MCF 10A (cell line): ENCODE measurements at regions of chr5 and their contacts with region 1.

Region 1: GRCh38 chr5:139560752-139561654 is at the start of gene UBE2D2:
- DNase-seq: peak; percentile 98
- H3K4me3 Mint-ChIP-seq: peak within 1 kb of the TSS; percentile 85
- H3K27ac Mint-ChIP-seq: peak within 1 kb of the TSS; percentile 88
- H3K4me1 Mint-ChIP-seq: peaks cover 12% of the 10 kb centered on the region
- H3K27me3 Mint-ChIP-seq: no peaks in the 10 kb centered on the region
- CTCF ChIP-seq: no peak
- total RNA-seq, gene UBE2D2: 306 and 329 TPM in 2 replicates

Region 2: DNA sequence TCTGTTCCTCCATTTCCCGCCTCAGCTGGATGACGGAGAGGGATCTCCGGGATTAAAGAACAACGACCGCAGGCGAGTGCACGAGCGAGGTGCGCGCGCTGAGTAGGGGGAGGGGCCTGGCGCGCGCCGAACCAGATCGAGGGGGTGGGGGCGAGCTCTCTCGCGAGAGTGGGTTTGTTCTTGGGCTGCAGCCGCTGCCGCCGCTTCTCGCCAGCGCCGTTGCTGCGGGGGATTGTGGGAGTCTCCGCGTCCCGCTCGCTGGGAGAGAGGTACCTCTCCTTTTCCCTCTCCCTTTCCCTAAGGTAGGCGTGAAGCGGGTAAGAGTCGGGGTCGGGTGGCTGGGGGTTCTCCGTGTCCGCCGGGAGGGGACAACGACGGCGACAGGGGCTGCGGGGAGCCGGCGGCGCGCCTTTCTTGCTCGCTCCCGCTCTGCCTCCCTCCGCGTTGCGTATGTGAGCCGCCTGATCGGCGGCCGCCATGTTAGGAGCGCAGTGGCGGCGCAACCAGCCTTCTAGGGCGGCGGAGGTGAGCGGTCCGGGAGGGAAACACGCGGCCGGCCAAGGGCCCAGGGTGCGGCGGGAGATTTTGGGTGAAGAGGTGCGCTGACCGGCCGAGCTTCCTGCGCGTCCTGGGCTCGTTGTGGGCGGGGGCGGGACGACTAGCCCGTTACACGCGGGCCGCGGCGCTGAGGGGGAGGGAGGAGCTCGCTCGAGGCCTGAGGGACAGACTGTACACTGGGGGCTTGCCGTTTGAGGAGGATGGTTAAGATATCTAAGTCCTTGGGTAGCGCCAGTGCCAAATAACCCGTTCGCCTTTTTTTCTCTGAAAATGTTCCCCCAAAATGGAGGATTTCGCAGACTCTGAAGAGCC is 267.3 kb before region 1 on chr5 and contains the start of gene MATR3:
- CTCF ChIA-PET with region 1: no interaction called
- POLR2A ChIA-PET with region 1: interaction called, 16 read pairs
- intact Hi-C with region 1: no loop called
- DNase-seq: peak; percentile 98
- H3K4me3 Mint-ChIP-seq: peak within 1 kb of the TSS; percentile 94
- H3K27ac Mint-ChIP-seq: peak within 1 kb of the TSS; percentile 99
- H3K4me1 Mint-ChIP-seq: peaks cover 37% of the 10 kb centered on the region
- H3K27me3 Mint-ChIP-seq: no peaks in the 10 kb centered on the region
- CTCF ChIP-seq: no peak
- total RNA-seq, gene MATR3: 152 and 159 TPM in 2 replicates

Region 3: DNA sequence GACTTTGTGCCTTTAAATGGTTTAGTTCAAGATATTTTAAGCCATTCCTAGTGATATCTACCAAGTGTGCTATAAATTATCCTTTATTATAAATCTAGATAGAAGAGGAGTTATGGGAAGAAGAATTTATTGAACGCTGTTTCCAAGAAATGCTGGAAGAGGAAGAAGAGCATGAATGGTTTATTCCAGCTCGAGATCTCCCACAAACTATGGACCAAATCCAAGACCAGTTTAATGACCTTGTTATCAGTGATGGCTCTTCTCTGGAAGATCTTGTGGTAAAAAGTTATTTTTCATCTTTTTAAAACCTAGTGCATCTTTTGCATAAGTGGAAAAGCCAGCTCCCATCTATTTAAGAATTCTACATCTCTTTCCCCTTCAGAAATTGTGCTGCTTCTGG is 196.5 kb before region 1 on chr5:
- CTCF ChIA-PET with region 1: no interaction called
- POLR2A ChIA-PET with region 1: no interaction called
- intact Hi-C with region 1: no loop called
- DNase-seq: no peak
- H3K4me3 Mint-ChIP-seq: no peak overlapping the region
- H3K27ac Mint-ChIP-seq: no peak overlapping the region
- H3K4me1 Mint-ChIP-seq: peaks cover 6% of the 10 kb centered on the region
- H3K27me3 Mint-ChIP-seq: no peaks in the 10 kb centered on the region
- CTCF ChIP-seq: no peak

Region 4: GRCh38 chr5:139574641-139575312 is 13.8 kb after region 1 on chr5:
- CTCF ChIA-PET with region 1: interaction called, 34 read pairs
- POLR2A ChIA-PET with region 1: interaction called, 70 read pairs
- intact Hi-C with region 1: no loop called
- DNase-seq: peak; percentile 70
- H3K4me3 Mint-ChIP-seq: no peak overlapping the region
- H3K27ac Mint-ChIP-seq: peak overlapping the region; percentile 71
- H3K4me1 Mint-ChIP-seq: peaks cover 42% of the 10 kb centered on the region
- H3K27me3 Mint-ChIP-seq: no peaks in the 10 kb centered on the region
- CTCF ChIP-seq: peak; percentile 75

Region 5: DNA sequence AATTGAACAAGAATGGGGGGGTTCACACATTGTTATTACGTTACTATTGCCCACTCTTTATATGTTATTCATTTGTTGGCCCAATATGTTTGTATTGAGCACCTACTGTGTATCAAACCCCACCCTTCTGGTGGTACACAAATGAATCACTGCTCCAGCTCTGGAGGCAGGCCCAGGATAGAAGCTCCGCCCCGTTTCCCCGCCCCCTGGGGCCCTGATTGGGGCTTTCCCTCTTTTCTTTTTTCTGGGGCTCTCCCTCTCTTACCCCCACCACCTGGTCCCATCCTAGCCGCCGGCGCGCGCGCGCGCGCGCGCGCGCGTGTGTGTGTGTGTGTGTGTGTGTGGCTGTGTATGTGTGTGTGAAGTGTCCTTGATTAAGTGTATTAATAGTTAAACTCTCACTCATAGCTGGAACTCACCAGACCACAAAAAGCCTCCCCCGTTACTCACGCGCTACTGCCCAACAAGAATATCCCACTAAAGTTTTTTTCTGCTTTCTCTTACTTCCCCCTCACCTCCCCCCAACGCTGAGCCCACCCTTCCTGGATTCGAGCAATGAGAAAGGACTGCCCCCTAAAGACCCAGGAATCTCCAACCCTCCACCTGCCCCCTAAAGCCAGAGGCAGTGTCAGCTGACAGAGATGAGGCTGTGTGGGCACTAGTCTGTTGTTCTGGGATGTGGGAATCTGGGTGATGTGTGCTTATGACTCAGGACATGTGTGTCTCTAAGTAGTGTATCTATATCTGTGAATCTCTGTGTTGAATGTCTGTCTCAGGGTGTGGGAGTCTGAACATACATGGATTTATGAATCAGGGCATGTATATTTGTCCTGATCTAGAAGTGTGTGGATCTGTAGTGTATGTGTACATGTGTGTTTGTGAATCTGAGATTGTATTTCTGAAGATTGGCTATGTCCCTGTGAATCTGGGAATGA is 91.1 kb after region 1 on chr5:
- CTCF ChIA-PET with region 1: interaction called, 4 read pairs
- POLR2A ChIA-PET with region 1: interaction called, 14 read pairs
- intact Hi-C with region 1: no loop called
- DNase-seq: peak; percentile 87
- H3K4me3 Mint-ChIP-seq: peak overlapping the region; percentile 87
- H3K27ac Mint-ChIP-seq: peak overlapping the region; percentile 33
- H3K4me1 Mint-ChIP-seq: peaks cover 30% of the 10 kb centered on the region
- H3K27me3 Mint-ChIP-seq: no peaks in the 10 kb centered on the region
- CTCF ChIP-seq: no peak

Region 6: GRCh38 chr5:139690064-139690802 is 129.2 kb after region 1 on chr5:
- CTCF ChIA-PET with region 1: interaction called, 3 read pairs
- POLR2A ChIA-PET with region 1: no interaction called
- intact Hi-C with region 1: loop called (anchors 5 kb)
- DNase-seq: peak; percentile 66
- H3K4me3 Mint-ChIP-seq: no peak overlapping the region
- H3K27ac Mint-ChIP-seq: no peak overlapping the region
- H3K4me1 Mint-ChIP-seq: peaks cover 6% of the 10 kb centered on the region
- H3K27me3 Mint-ChIP-seq: no peaks in the 10 kb centered on the region
- CTCF ChIP-seq: peak; percentile 84

Region 7: GRCh38 chr5:140420226-140420570 is 859.2 kb after region 1 on chr5:
- CTCF ChIA-PET with region 1: no interaction called
- POLR2A ChIA-PET with region 1: no interaction called
- intact Hi-C with region 1: no loop called
- DNase-seq: peak; percentile 43
- H3K4me3 Mint-ChIP-seq: no peak overlapping the region
- H3K27ac Mint-ChIP-seq: no peak overlapping the region
- H3K4me1 Mint-ChIP-seq: peaks cover 39% of the 10 kb centered on the region
- H3K27me3 Mint-ChIP-seq: no peaks in the 10 kb centered on the region
- CTCF ChIP-seq: no peak